PC-3 (cell line): ENCODE measurements at regions of chr12 and their contacts with region 1.

Region 1: DNA sequence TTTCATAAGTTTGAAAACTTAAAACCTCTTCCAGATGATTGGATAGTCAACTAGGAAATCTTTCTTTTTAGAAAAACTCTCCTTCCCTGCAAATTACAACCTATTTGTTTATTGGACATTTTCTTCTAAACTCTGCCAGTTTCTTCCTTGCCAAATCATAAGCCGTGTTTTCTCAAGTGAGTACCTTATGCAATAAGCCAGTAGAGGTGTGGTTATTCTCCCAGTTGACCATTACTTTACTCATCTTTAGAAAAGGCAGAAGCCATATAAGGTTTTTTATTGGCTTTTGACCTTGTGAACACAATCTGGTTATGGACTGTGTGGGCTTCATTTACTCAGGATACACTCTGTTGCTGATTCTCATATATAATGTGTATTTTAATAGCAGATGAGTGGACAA is 14.6 kb downstream of the ACTR6 start:
- DNase-seq: no peak
- ATAC-seq: no peak
- H3K4me3 ChIP-seq: no peak overlapping the region
- H3K27ac ChIP-seq: no peak overlapping the region
- H3K4me1 ChIP-seq: no peaks in the 10 kb centered on the region
- H3K27me3 ChIP-seq: no peaks in the 10 kb centered on the region
- CTCF ChIP-seq: no peak

Region 2: DNA sequence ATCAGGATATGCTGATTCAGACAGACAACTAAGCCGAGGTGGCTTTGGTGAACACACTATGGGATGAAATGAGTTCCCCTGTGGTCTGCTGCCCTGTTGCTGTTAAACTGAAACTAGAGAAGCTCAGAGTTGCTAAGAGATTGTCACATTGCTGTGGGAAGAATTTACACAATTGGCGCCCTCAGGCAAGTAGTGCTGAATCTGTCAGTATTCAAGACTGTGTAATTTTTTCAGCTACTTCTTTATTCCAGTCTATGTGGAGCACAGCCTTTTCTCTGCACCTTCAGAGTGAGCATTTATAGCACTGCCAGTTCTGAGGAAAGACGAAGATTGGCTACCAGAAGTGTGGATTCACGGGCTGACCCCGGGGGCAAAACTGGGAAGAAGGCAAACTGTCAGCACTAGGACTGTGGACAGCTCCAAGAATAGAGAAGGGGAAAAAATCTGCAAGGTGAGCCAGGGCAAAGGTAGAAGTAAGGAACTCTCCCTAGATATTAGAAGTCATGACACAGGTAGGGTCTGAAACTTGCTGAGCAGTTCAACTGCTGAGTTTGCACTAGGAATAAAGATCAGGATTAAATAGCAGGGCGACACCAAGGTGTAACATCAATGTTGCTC is 1918.6 kb before region 1 on chr12:
- CTCF ChIA-PET with region 1: no interaction called
- POLR2A ChIA-PET with region 1: no interaction called
- intact Hi-C with region 1: no loop called
- DNase-seq: no peak
- ATAC-seq: no peak
- H3K4me3 ChIP-seq: no peak overlapping the region
- H3K27ac ChIP-seq: no peak overlapping the region
- H3K4me1 ChIP-seq: no peaks in the 10 kb centered on the region
- H3K27me3 ChIP-seq: peaks cover 33% of the 10 kb centered on the region
- CTCF ChIP-seq: no peak

Region 3: GRCh38 chr12:99875081-99875480 is 340.1 kb before region 1 on chr12:
- CTCF ChIA-PET with region 1: no interaction called
- POLR2A ChIA-PET with region 1: no interaction called
- intact Hi-C with region 1: loop called (anchors 10 kb)
- DNase-seq: no peak
- ATAC-seq: no peak
- H3K4me3 ChIP-seq: no peak overlapping the region
- H3K27ac ChIP-seq: no peak overlapping the region
- H3K4me1 ChIP-seq: no peaks in the 10 kb centered on the region
- H3K27me3 ChIP-seq: 0 out of 2 replicates have a peak, but pooled peaks cover under 1% of the 10 kb centered on the region
- CTCF ChIP-seq: no peak

Region 4: GRCh38 chr12:100447381-100447780 is 232.2 kb after region 1 on chr12:
- CTCF ChIA-PET with region 1: no interaction called
- POLR2A ChIA-PET with region 1: no interaction called
- intact Hi-C with region 1: no loop called
- DNase-seq: no peak
- ATAC-seq: no peak
- H3K4me3 ChIP-seq: no peak overlapping the region
- H3K27ac ChIP-seq: no peak overlapping the region
- H3K4me1 ChIP-seq: no peaks in the 10 kb centered on the region
- H3K27me3 ChIP-seq: peaks cover 66% of the 10 kb centered on the region
- CTCF ChIP-seq: no peak